Adrenal gland (tissue), 19 donors: ENCODE measurements at regions of chr15 and their contacts with region 1.

Region 1: GRCh38 chr15:28955160-28956008 is 69.6 kb downstream of the APBA2 start:
- DNase-seq: peak in 1 of 7 donors; percentile 34
- H3K4me3 ChIP-seq: no peak overlapping the region
- H3K27ac ChIP-seq: no peak overlapping the region
- H3K4me1 ChIP-seq: no peaks in the 10 kb centered on the region
- H3K27me3 ChIP-seq: peaks cover 3% of the 10 kb centered on the region
- CTCF ChIP-seq: no peak
- POLR2A ChIP-seq: no peak

Region 2: DNA sequence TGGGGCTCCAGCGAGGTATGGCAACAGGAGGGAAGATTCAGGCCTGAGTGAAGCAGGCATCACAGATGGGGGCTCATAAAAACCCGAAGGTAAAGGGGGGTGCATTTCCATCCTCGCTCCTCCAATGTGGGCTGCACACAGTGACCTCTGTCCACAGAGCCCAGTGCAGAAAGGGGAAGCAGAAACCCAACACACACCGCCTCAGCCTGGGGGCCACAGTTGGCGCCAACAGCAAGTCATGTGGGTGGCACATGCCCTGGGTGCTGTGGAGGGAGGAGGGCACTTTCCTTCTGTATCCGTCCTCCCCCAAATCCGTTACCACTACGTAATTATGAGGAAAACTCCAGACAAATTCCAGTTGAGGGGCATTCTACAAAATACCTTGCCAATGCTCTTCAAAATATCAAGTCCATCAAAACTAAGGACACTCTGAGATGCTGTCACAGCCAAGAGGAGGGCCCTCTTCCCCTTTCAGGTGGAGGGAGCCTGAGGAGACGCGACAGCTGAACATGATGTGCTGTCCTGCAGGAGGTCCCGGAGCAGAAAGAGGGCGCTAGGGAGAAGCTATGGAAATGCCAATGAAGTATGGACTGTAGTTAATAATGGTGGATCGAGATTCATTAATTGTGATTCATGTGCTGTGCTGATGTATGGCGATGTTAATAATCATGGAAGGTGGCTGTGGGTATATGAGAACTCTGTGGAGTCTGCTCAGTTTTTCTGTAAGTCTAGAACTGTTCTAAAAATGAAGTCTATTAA is 53.2 kb before region 1 on chr15:
- intact Hi-C with region 1: loop called in 1 of 2 experiments (anchors 10 kb)
- DNase-seq: no peak
- H3K4me3 ChIP-seq: no peak overlapping the region
- H3K27ac ChIP-seq: no peak overlapping the region
- H3K4me1 ChIP-seq: no peaks in the 10 kb centered on the region
- H3K27me3 ChIP-seq: no peaks in the 10 kb centered on the region
- CTCF ChIP-seq: no peak
- POLR2A ChIP-seq: no peak

Region 3: DNA sequence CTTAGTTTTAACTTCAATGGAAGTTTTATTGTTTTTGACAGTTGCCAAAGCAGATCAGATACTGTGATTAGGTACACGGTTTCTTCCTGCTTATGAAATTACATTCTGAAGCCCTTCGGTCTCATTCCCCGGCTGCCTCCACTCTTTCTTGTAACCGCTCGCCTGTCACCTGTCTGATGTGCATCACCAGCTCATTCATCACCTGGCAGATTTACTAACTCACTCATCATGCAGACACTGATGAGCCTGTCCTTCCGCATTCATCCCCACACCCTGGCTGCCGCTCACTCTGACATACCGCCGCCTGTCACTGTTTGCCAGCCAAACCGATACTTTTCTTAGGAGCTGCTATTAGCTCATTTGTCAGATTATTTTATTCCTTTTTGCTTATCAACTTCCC is 397.0 kb after region 1 on chr15:
- intact Hi-C with region 1: no loop called
- DNase-seq: no peak
- H3K4me3 ChIP-seq: no peak overlapping the region
- H3K27ac ChIP-seq: no peak overlapping the region
- H3K4me1 ChIP-seq: no peaks in the 10 kb centered on the region
- H3K27me3 ChIP-seq: no peaks in the 10 kb centered on the region
- CTCF ChIP-seq: no peak
- POLR2A ChIP-seq: no peak